Sciatic nerve (tissue), 2 donors: ENCODE measurements at regions of chr18 and their contacts with region 1.

Region 1: DNA sequence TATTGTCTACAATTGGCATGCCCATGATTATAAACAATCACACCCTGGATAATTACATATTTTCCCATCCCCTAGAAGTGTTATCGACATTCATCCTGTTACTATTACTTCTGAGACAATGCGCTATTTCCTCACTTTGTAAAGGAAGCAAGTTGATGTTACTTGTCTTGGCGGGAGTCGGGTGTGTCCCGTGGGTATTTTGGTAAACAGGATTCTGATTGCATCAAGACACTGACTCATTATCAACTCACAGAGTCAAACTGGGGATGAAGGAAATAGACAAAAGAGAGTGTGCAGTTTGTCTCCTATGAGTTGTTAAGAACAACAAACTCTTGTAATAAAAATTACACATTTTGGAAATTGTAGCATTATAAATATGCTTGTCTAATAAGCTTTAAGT is 142.7 kb downstream of the GALR1 start:
- DNase-seq: no peak
- ATAC-seq: no peak

Region 2: DNA sequence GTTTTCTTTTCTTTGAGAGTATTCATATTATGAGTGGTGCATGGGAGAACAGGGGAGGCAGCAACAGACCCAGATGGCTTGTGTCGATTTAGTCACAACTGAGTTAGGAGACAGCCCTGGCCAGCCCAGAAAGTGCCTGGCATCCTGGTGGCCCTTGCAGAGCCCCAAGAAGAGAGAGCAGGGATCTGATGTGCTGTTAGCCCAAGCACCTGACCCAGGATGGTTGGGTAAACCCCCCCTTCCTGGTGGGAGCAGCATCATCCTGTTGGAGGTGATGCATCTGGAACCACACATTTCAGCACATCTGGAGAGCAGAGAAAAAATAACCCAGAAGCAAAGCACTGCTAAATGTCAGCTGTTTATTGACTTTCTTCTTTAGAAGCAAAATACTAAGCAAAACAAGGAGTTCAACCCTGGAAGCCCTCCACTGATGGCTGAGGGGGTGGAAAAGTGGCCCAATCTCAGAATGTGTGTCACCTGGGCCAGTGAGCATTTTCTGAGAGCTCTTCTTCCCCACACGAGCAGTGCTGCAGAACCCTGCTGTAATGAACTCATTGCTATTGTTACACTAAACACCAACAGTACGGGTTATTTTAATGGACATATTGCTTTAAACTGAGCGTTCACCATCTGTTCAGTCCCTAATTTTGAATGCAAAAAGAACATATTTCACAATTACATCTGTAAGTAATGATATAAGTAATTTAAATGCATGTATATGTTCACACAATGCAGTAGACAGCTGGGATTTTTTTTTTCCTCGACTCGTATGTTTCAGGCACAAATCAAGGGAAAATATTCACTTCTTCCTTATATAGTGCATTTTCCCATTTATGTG is 1864.3 kb before region 1 on chr18:
- intact Hi-C with region 1: loop called (anchors 5 kb)
- DNase-seq: no peak
- ATAC-seq: no peak